ENCODE measurements at regions of chr4 and their contacts with region 1.

Region 1: DNA sequence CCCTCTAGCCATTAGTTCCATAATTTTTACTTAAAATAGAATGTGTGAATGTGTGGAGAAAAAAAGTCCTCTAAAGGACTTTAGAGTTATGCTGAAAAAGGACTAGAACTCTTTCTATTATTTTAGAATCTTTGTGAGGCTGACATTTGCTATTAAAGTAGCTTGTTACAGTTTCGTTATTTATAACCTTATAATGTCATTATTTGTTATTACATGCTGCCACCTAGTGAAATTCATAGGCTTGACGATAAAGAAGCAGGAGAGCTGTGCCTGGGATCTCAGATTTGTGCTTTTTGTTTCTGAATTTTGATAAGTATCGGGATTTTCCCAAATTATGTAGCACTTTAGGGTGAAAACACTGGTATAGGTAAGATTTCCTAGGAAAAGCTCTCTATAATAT is 38.5 kb upstream of the TAPT1 start:
- DNase-seq: no peak
- ATAC-seq: peak; percentile 62
- H3K4me3 Mint-ChIP-seq: no peak overlapping the region
- H3K27ac Mint-ChIP-seq: no peak overlapping the region
- H3K4me1 Mint-ChIP-seq: peaks cover 44% of the 10 kb centered on the region
- H3K27me3 Mint-ChIP-seq: no peaks in the 10 kb centered on the region
- CTCF ChIP-seq: no peak

Region 2: GRCh38 chr4:15805583-15806517 is 458.9 kb before region 1 on chr4:
- CTCF ChIA-PET with region 1: interaction called, 15 read pairs
- POLR2A ChIA-PET with region 1: no interaction called
- intact Hi-C with region 1: loop called (anchors 1 kb)
- DNase-seq: no peak
- ATAC-seq: peak; percentile 81
- H3K4me3 Mint-ChIP-seq: no peak overlapping the region
- H3K27ac Mint-ChIP-seq: no peak overlapping the region
- H3K4me1 Mint-ChIP-seq: peaks cover 50% of the 10 kb centered on the region
- H3K27me3 Mint-ChIP-seq: no peaks in the 10 kb centered on the region
- CTCF ChIP-seq: peak; percentile 20

Region 3: DNA sequence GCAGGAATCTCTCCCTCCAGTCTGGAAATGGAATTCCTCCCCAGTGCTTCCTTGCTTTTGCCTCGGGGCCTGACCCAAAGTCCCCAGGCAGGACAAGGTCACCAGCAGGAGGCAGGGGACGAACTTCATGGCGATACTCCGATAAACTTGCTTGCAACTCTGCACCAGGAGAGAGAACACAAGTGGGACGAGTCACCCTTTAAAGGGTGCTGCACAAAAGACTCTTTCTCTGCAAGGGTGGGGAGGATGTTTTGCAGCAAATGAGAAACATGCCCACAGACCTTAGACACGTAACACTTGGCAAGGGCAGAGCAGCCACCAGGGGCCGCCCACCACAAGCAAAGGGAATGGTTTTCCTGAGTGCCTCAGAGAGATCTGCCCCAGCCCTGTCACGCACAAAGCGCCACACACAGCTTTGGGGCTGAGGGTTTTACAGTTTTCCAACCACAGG is 301.8 kb before region 1 on chr4 and contains the start of gene FGFBP2:
- CTCF ChIA-PET with region 1: interaction called, 3 read pairs
- POLR2A ChIA-PET with region 1: no interaction called
- intact Hi-C with region 1: loop called (anchors 2 kb)
- DNase-seq: no peak
- ATAC-seq: peak; percentile 52
- H3K4me3 Mint-ChIP-seq: no peak within 1 kb of the TSS
- H3K27ac Mint-ChIP-seq: no peak within 1 kb of the TSS
- H3K4me1 Mint-ChIP-seq: peaks cover 9% of the 10 kb centered on the region
- H3K27me3 Mint-ChIP-seq: peaks cover 5% of the 10 kb centered on the region
- CTCF ChIP-seq: no peak
- total RNA-seq, gene FGFBP2: 0.20 and 0.39 TPM in 2 replicates

Region 4: DNA sequence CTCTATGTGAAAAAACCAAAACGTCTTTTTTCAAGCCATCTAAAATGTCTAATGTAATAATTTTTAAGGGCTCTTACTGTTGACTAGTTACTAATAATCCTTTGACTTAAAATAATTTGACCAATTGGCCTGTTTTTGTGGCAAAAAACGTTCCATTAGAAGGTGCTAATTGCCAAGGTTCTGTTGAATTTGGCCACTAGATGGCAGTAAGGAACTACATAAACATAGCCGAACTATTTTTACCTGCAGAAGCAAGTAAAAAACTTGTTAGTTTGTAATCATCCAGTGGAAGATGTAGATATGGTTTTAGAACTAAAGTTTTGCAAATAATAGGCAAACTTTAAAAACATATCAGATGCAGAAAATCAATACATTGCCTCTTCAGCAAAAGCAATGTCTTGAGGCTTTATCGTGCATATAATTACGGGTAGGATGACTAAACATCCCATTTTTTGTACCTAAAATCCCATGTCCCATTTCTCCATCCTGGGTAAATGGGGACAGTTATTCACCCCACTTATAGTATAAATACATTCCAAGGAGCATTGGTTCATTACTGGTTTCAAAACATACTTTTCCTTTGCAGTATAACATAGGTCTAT is 238.5 kb before region 1 on chr4:
- CTCF ChIA-PET with region 1: interaction called, 66 read pairs
- POLR2A ChIA-PET with region 1: no interaction called
- intact Hi-C with region 1: loop called (anchors 1 kb)
- DNase-seq: no peak
- ATAC-seq: no peak
- H3K4me3 Mint-ChIP-seq: no peak overlapping the region
- H3K27ac Mint-ChIP-seq: no peak overlapping the region
- H3K4me1 Mint-ChIP-seq: no peaks in the 10 kb centered on the region
- H3K27me3 Mint-ChIP-seq: peaks cover 6% of the 10 kb centered on the region
- CTCF ChIP-seq: peak; percentile 37

Region 5: GRCh38 chr4:16205298-16206164 is 59.3 kb before region 1 on chr4:
- CTCF ChIA-PET with region 1: interaction called, 20 read pairs
- POLR2A ChIA-PET with region 1: interaction called, 3 read pairs
- intact Hi-C with region 1: loop called (anchors 2 kb)
- DNase-seq: peak; percentile 28
- ATAC-seq: peak; percentile 86
- H3K4me3 Mint-ChIP-seq: no peak overlapping the region
- H3K27ac Mint-ChIP-seq: peak overlapping the region; percentile 7
- H3K4me1 Mint-ChIP-seq: peaks cover 33% of the 10 kb centered on the region
- H3K27me3 Mint-ChIP-seq: no peaks in the 10 kb centered on the region
- CTCF ChIP-seq: no peak

Region 6: DNA sequence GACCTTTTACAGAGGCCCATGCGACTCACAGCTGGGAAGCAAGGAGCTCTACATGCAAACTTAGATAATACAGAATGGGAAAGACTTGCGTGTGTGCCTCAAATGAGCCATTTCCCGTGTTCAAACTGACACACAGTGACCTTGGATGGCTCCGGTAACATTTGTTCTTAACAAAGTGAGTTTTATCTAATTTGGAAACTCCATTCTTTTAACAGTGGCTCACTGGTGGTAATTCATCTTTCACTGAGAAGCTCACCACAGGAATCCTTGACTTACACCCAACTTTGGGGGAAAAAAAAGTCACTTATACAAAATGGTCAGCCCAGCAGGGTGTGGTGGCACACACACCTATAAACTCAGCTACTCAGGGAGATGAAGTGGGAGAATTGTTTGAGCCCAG is 443.1 kb after region 1 on chr4:
- CTCF ChIA-PET with region 1: no interaction called
- POLR2A ChIA-PET with region 1: no interaction called
- intact Hi-C with region 1: no loop called
- DNase-seq: no peak
- ATAC-seq: no peak
- H3K4me3 Mint-ChIP-seq: no peak overlapping the region
- H3K27ac Mint-ChIP-seq: no peak overlapping the region
- H3K4me1 Mint-ChIP-seq: no peaks in the 10 kb centered on the region
- H3K27me3 Mint-ChIP-seq: no peaks in the 10 kb centered on the region
- CTCF ChIP-seq: no peak